MCF 10A (cell line): ENCODE measurements at regions of chr17 and their contacts with region 1.

Region 1: DNA sequence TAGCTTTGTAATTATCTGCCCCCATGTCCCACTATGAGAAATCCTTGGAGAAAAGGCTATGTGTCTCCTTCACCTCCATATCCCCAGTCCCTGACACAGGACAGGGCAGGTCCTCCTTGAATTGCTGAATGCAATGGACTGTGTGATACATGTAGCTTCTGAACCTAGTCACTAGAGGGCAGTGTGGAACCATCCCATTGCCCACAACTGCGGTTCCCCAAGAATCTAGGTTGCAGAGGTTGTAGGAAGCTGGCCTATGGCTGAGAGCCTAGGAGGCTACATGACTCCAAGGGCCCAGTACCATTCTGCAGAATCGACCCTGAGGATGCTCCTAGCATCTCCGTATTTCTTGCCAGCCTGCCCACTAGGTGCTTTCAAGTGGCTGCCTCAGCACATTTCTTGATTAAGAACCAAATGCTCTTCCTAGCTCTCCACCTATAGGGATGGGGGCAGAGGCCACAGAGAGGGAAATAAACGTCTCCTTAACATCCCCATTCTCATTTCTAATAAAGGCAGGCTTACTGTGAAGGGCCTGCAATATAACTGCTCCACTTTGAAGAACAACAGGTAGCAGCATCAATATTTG is 394.0 kb downstream of the CA10 start:
- DNase-seq: peak; percentile 75
- H3K4me3 Mint-ChIP-seq: no peak overlapping the region
- H3K27ac Mint-ChIP-seq: no peak overlapping the region
- H3K4me1 Mint-ChIP-seq: no peaks in the 10 kb centered on the region
- H3K27me3 Mint-ChIP-seq: peaks cover 68% of the 10 kb centered on the region
- CTCF ChIP-seq: peak; percentile 88

Region 2: DNA sequence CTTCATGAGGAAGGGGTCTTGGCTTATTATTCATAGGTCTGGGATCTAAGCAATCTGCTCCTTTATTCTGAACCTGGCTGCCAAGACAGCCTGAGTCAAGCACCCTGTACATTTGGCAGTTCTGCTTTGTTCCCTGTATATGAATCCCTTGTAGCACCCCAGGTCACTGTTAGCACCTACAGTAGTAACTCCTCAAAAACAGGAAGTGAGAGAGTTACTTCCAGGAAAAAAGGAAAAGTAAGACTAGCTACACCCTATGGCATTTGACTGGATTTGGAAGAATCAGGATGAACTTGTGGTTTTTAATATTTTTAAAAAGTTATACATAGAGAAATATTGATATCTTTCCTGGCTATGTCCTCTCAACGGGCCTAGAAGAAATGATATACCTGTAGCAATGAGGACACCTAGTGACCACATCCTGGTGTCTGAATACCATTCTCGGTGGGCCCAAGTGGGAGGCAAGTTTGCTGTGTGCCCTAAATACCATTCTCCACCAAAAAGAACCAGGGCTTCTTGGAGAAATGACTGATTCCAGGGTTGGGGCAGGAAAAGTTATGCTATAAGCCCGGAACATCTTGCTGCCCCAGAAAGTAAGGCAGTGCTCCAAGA is 1066.7 kb before region 1 on chr17:
- CTCF ChIA-PET with region 1: no interaction called
- POLR2A ChIA-PET with region 1: no interaction called
- intact Hi-C with region 1: no loop called
- DNase-seq: no peak
- H3K4me3 Mint-ChIP-seq: no peak overlapping the region
- H3K27ac Mint-ChIP-seq: peak overlapping the region; percentile 91
- H3K4me1 Mint-ChIP-seq: peaks cover 28% of the 10 kb centered on the region
- H3K27me3 Mint-ChIP-seq: no peaks in the 10 kb centered on the region
- CTCF ChIP-seq: no peak

Region 3: GRCh38 chr17:51371732-51372151 is 392.7 kb before region 1 on chr17:
- CTCF ChIA-PET with region 1: interaction called, 5 read pairs
- POLR2A ChIA-PET with region 1: no interaction called
- intact Hi-C with region 1: loop called (anchors 1 kb)
- DNase-seq: peak; percentile 77
- H3K4me3 Mint-ChIP-seq: peak overlapping the region; percentile 75
- H3K27ac Mint-ChIP-seq: peak overlapping the region; percentile 80
- H3K4me1 Mint-ChIP-seq: peaks cover 13% of the 10 kb centered on the region
- H3K27me3 Mint-ChIP-seq: no peaks in the 10 kb centered on the region
- CTCF ChIP-seq: peak; percentile 74

Region 4: DNA sequence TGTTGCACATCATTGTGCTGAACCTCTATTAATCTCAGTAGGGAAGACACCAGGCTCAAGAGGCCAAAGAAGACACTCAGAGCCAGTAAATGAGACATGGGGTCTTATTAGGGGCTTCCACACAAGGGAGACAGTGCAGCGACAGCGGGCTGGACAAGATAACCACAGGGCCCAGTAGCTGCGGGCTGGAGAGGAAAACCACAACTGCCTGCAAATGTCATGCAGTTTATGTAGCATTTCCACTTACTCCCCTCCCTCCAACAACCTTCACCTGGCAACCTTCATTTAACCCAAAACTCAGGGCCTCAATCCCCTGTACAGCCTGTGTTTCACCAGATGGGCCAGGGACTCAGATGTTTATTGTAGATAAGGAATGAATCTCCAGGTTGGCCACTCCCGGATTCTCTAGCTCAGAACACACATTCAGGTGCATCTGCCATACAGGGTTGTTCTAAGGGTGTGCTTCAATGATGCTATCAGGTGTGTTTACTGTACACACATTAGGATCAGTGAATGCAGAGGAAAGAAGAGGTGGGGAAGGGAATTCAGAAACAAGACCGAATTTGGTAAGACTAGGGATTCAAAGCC is 318.4 kb before region 1 on chr17:
- CTCF ChIA-PET with region 1: no interaction called
- POLR2A ChIA-PET with region 1: no interaction called
- intact Hi-C with region 1: no loop called
- DNase-seq: no peak
- H3K4me3 Mint-ChIP-seq: no peak overlapping the region
- H3K27ac Mint-ChIP-seq: no peak overlapping the region
- H3K4me1 Mint-ChIP-seq: no peaks in the 10 kb centered on the region
- H3K27me3 Mint-ChIP-seq: peaks cover 57% of the 10 kb centered on the region
- CTCF ChIP-seq: no peak

Region 5: GRCh38 chr17:51725185-51725584 is 39.3 kb before region 1 on chr17:
- CTCF ChIA-PET with region 1: no interaction called
- POLR2A ChIA-PET with region 1: no interaction called
- intact Hi-C with region 1: no loop called
- DNase-seq: no peak
- H3K4me3 Mint-ChIP-seq: no peak overlapping the region
- H3K27ac Mint-ChIP-seq: no peak overlapping the region
- H3K4me1 Mint-ChIP-seq: peaks cover 6% of the 10 kb centered on the region
- H3K27me3 Mint-ChIP-seq: no peaks in the 10 kb centered on the region
- CTCF ChIP-seq: no peak

Region 6: DNA sequence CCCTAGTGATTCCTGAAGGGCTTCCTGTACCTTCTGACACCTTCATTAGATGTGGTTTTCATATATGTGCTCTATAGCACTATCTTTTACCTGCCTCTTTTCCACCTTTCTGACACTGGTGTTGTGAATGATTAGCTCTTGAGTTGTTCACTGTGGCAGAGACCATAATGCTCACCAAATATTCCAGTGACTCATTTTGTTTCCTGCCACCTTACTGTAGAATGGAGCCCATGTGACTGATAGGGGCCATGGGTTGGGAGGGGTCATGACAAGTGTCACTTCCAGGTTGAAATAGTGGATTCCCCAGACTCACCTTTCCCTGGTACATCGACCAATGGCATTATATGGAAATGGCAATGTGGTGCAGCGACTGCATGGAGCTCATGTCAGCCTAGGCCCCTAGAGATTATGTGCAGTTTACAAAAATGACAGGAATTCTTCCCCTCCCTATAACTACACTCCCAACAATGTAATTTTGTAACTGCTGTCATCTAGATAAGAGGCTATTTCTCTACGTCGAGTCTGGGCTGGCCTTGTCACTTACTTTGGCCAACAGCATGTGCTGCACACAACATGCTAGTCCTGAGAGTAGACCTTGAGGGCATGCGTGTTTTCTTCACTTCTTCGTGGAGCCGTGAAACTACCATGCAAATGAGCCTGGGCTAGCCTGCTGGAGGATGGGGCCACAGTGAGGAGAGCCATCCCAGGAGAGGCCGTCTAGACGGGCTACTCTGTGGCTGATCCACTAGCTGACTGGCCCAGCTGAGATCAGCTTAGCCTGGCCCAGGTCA is 15.5 kb before region 1 on chr17:
- CTCF ChIA-PET with region 1: interaction called, 49 read pairs
- POLR2A ChIA-PET with region 1: no interaction called
- intact Hi-C with region 1: no loop called
- DNase-seq: no peak
- H3K4me3 Mint-ChIP-seq: no peak overlapping the region
- H3K27ac Mint-ChIP-seq: no peak overlapping the region
- H3K4me1 Mint-ChIP-seq: peaks cover 15% of the 10 kb centered on the region
- H3K27me3 Mint-ChIP-seq: no peaks in the 10 kb centered on the region
- CTCF ChIP-seq: no peak

Region 7: GRCh38 chr17:51848460-51848859 is 84.0 kb after region 1 on chr17:
- CTCF ChIA-PET with region 1: no interaction called
- POLR2A ChIA-PET with region 1: no interaction called
- intact Hi-C with region 1: loop called (anchors 2 kb)
- DNase-seq: peak; percentile 36
- H3K4me3 Mint-ChIP-seq: no peak overlapping the region
- H3K27ac Mint-ChIP-seq: no peak overlapping the region
- H3K4me1 Mint-ChIP-seq: peaks cover 6% of the 10 kb centered on the region
- H3K27me3 Mint-ChIP-seq: no peaks in the 10 kb centered on the region
- CTCF ChIP-seq: no peak

Region 8: DNA sequence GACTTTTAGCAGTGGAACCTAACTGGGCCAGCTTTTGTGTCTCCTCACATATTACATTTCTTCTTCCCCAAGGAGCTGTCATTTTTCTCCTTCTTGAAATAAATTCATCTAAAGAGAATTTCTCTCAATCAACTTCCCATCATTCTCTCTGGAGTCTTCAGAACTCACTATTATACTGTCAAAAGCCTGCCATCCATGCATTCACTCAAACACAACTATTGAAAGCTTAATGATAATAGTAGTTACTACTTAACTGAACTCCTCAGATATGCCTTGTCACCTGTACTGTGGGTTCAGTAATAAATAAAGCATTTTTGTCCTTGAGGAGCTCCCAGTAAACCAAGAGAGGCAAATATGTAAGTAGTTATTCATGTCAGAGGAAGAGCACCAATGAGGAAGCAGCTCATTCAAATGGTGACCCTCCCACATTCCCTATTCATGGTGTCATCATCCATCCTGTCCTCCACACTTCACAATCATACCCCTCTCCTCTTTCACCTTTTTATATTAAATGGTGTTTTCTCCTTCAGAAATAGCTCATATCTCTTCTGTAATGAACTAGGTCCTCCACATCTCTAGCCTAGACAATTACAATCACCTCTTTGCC is 231.4 kb after region 1 on chr17:
- CTCF ChIA-PET with region 1: no interaction called
- POLR2A ChIA-PET with region 1: no interaction called
- intact Hi-C with region 1: no loop called
- DNase-seq: no peak
- H3K4me3 Mint-ChIP-seq: no peak overlapping the region
- H3K27ac Mint-ChIP-seq: no peak overlapping the region
- H3K4me1 Mint-ChIP-seq: no peaks in the 10 kb centered on the region
- H3K27me3 Mint-ChIP-seq: no peaks in the 10 kb centered on the region
- CTCF ChIP-seq: no peak

Region 9: GRCh38 chr17:52106638-52107261 is 342.3 kb after region 1 on chr17:
- CTCF ChIA-PET with region 1: interaction called, 124 read pairs
- POLR2A ChIA-PET with region 1: no interaction called
- intact Hi-C with region 1: loop called (anchors 1 kb)
- DNase-seq: peak; percentile 61
- H3K4me3 Mint-ChIP-seq: no peak overlapping the region
- H3K27ac Mint-ChIP-seq: no peak overlapping the region
- H3K4me1 Mint-ChIP-seq: no peaks in the 10 kb centered on the region
- H3K27me3 Mint-ChIP-seq: peaks cover 32% of the 10 kb centered on the region
- CTCF ChIP-seq: peak; percentile 77